Kidney (tissue), 22 donors: ENCODE measurements at regions of chr6 and their contacts with region 1.

Region 1: GRCh38 chr6:163427498-163428254 is 13.2 kb downstream of the QKI start:
- DNase-seq: peak in 2 of 5 donors; percentile 79 to 86
- H3K4me3 ChIP-seq: no peak overlapping the region
- H3K27ac ChIP-seq: no peak overlapping the region
- H3K4me1 ChIP-seq: peaks cover 0 to 16% (median 0%) of the 10 kb centered on the region in 3 donors
- H3K27me3 ChIP-seq: no peaks in the 10 kb centered on the region
- CTCF ChIP-seq: no peak

Region 2: DNA sequence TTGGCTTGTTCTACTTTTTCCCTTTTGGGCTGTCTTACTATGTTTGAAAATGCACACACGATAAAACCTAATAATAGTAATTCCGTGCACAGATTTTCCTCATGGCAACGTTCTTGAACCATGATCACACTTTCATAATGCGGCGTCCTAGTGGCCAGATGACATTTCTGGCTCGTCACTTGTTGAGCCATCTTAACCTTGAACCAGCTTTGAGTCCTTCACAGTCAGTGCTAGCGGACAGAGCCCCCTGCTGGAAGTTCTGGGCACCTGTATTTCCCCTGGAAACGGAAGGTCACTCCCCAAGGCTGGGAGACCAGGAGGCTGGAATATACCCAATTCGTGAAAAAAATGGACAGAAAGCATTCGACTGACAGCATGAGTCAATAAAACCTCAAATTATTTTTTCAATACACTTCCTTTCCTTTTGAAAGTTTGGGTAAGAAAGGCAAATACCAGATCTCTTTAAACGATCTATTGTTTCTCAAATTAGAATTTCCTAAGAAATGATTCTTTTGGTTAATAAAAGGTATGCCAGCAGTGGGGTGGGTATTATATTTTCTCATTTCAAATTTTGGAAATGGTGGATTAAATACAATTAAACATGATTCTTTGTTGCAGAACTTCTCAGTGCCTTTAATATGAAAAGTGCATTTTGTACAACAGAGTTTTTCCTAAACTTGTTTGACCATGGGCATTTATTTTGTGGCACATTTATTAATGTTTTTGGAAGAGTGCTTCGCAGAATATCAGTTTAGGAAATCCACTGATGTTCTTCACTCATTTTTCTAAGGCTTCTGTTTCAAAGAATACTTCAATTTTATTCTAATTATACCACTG is 529.1 kb after region 1 on chr6:
- intact Hi-C with region 1: loop called (anchors 10 kb)
- DNase-seq: peak in 4 of 5 donors; percentile 73 to 84 (median 82)
- H3K4me3 ChIP-seq: peak overlapping the region in 1 of 3 donors; percentile 40
- H3K27ac ChIP-seq: no peak overlapping the region
- H3K4me1 ChIP-seq: peaks cover 0 to 6% (median 4%) of the 10 kb centered on the region in 3 donors
- H3K27me3 ChIP-seq: no peaks in the 10 kb centered on the region
- CTCF ChIP-seq: peak; percentile 90